Calu3 (cell line): ENCODE measurements at regions of chr5 and their contacts with region 1.

Region 1: DNA sequence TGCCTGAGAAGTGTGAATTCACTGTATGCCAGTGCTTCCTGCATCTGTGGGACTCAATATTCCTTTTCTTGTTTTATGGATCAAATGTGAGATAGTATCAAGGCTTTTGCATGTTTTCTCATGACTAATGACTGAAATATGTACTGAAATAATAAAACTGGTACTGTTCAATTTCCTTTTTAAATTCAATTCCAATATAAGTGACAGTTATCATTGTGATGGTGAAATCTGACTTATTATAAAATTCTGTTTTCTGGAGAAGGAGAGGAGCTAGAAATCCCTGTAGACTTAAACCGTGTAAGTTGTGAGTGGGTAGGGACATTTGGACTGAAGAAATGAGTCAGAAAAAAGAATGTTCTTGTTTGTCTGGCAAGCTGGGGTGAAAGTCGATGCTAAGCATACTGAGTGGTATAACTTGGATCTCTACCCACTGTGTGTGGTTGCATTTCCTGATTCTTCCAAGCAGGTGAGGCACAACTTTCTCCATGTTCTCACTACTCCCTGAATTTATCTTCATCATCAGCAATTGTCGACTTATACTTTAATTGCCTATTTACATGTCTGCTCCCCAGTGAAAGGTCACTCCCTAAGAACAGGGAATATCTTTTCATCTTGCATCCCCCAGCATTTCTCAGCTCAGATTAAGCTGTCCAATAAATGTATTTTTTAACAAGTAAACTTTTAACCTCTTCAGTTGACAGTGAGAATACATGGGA is 245.0 kb downstream of the EFNA5 start:
- DNase-seq: peak; percentile 55
- H3K4me3 Mint-ChIP-seq: peak overlapping the region; percentile 1
- H3K27ac Mint-ChIP-seq: peak overlapping the region; percentile 67
- H3K4me1 Mint-ChIP-seq: peaks cover 74% of the 10 kb centered on the region
- H3K27me3 Mint-ChIP-seq: no peaks in the 10 kb centered on the region
- CTCF ChIP-seq: no peak

Region 2: DNA sequence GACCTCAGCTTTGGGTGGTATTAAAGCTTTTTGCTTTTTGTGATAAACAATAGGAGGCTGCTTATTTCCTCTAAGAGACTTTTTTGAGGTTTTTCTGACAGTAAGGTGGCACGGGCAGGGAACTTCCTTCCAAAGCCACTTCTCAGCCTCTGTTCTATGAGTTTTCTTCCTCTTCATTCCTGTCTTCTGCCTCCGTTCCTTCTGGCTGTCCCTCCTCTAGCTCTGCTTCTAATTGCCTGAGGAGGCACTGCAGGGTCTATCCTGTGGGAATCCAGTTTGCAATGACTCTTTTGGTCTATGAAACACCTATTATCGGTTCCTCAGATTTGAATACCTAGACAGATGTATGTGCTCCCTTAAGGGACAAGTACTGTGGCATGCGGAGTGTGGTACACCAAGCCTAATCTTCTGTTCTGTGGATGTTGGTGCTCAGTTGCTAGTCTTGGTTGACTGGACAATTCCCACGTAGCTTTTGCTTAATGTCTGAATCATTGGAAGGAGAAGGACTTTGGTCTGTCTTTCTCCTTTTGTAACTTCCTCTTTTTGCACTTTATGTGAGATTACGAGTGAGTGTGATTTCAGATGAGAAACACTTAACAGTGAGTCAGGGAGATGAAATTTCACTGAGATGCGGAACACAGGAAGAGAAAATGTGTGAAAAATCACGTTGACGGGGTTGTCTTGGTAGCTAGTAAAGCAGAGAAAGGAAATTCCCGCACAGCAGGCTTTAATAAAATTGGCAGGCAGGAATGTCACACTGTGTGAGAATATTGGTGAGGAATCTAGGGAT is 60.2 kb before region 1 on chr5:
- CTCF ChIA-PET with region 1: interaction called, 10 read pairs
- intact Hi-C with region 1: no loop called
- DNase-seq: no peak
- H3K4me3 Mint-ChIP-seq: peak overlapping the region; percentile 44
- H3K27ac Mint-ChIP-seq: peak overlapping the region; percentile 84
- H3K4me1 Mint-ChIP-seq: peaks cover 34% of the 10 kb centered on the region
- H3K27me3 Mint-ChIP-seq: no peaks in the 10 kb centered on the region
- CTCF ChIP-seq: no peak

Region 3: GRCh38 chr5:107436201-107436600 is 10.5 kb after region 1 on chr5:
- CTCF ChIA-PET with region 1: interaction called, 17 read pairs
- intact Hi-C with region 1: no loop called
- DNase-seq: no peak
- H3K4me3 Mint-ChIP-seq: no peak overlapping the region
- H3K27ac Mint-ChIP-seq: peak overlapping the region; percentile 71
- H3K4me1 Mint-ChIP-seq: peaks cover 43% of the 10 kb centered on the region
- H3K27me3 Mint-ChIP-seq: no peaks in the 10 kb centered on the region
- CTCF ChIP-seq: no peak

Region 4: GRCh38 chr5:107557051-107557658 is 131.5 kb after region 1 on chr5:
- CTCF ChIA-PET with region 1: no interaction called
- intact Hi-C with region 1: no loop called
- DNase-seq: peak; percentile 92
- H3K4me3 Mint-ChIP-seq: peak overlapping the region; percentile 45
- H3K27ac Mint-ChIP-seq: peak overlapping the region; percentile 80
- H3K4me1 Mint-ChIP-seq: peaks cover 87% of the 10 kb centered on the region
- H3K27me3 Mint-ChIP-seq: no peaks in the 10 kb centered on the region
- CTCF ChIP-seq: no peak